ENCODE measurements at regions of chr6 and their contacts with region 1.

Region 1: DNA sequence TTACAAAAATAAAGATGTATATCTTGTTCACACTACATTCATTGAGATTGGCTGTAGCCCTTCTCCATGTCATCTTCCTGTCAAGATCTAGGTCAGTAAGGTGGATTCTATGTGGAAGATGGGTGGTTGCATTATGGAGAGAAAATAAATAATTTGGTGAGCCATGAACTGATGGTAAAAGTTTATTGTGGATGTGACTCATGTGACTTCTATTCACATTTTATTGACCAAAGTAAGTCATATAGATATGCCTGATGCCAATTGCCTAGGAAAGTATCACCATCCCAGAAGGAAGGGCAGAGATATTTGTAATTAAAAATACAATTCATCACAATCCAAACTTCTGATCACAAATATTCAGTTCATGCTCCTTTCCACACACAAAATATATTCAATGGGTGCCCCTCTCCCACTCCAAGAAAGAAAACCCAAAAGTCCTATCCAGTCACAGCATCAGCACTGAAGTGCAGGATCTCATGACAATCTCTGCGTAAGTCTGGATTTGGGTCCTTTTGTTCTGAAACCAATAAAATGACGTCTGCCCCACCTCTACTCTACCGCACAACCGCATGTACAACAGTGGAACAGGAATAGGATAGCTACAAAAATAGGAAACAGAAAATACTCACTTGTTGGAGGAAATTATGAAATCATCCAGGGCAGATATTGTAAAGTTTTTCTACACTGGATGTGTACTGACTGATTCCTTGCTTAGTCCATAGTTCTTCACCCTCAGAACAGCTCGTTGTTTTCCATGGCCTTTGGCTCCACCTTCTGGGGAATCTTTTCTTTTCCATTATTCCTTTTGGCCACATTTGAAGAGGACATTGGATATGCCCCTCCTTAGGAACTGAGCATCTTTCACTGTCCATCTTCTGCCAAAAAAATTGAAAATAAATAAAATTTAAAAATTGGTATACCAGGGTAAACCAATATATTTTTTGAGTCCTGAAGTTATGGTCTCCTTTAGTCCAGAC is 16.1 kb upstream of the SLC17A3 start:
- DNase-seq: peak; percentile 7 to 36
- H3K4me3 ChIP-seq: no peak overlapping the region
- H3K27ac ChIP-seq: no peak overlapping the region
- H3K4me1 ChIP-seq: no peaks in the 10 kb centered on the region
- H3K27me3 ChIP-seq: no peaks in the 10 kb centered on the region
- CTCF ChIP-seq: peak in 5 of 6 experiments; percentile 26 to 71 (median 54)
- POLR2A ChIP-seq: no peak

Region 2: GRCh38 chr6:25788305-25788922 is 101.8 kb before region 1 on chr6:
- intact Hi-C with region 1: loop called (anchors 5 kb)
- DNase-seq: peak; percentile 47 to 57
- H3K4me3 ChIP-seq: no peak overlapping the region
- H3K27ac ChIP-seq: no peak overlapping the region
- H3K4me1 ChIP-seq: no peaks in the 10 kb centered on the region
- H3K27me3 ChIP-seq: no peaks in the 10 kb centered on the region
- CTCF ChIP-seq: peak in 5 of 6 experiments; percentile 11 to 59 (median 45)
- POLR2A ChIP-seq: no peak